Heart right ventricle (tissue), 16 donors: ENCODE measurements at regions of chr4 and their contacts with region 1.

Region 1: GRCh38 chr4:80215449-80216052 is 18.2 kb downstream of the PRDM8 start:
- DNase-seq: no peak
- ATAC-seq: peak in 1 of 8 donors; percentile 33
- H3K4me3 ChIP-seq: no peak overlapping the region
- H3K27ac ChIP-seq: no peak overlapping the region
- H3K4me1 ChIP-seq: peaks cover 0 to 6% (median 0%) of the 10 kb centered on the region in 9 donors
- H3K27me3 ChIP-seq: peaks cover 0 to 50% (median 23%) of the 10 kb centered on the region in 7 donors
- CTCF ChIP-seq: peak; percentile 37 to 83 (median 75)

Region 2: DNA sequence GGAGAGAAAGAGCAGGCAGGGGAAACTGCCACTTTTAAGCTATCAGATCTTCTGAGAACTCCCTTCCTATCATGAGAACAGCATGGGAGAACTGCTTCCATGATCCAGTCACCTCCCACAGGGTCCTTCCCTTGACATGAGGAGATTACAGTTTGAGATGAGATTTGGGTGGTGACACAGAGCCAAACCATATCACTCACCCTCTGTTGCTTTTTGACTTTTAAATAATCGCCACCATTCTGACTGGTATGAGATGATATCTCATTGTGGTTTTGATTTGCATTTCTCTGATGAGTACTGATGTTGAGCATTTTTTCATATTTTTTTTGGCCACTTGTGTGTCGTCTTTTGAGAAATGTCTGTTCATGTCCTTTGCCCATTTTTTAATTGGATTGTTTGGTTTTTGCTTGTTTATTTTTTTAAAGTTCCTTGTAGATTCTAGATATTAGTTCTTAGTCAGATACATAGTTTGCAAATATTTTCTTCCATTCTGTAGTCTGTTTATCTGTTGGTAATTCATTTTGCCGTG is 1269.8 kb before region 1 on chr4:
- intact Hi-C with region 1: loop called in 6 of 10 experiments (anchors 5 kb)
- DNase-seq: no peak
- ATAC-seq: no peak
- H3K4me3 ChIP-seq: no peak overlapping the region
- H3K27ac ChIP-seq: no peak overlapping the region
- H3K4me1 ChIP-seq: peaks cover 0 to 9% (median 0%) of the 10 kb centered on the region in 9 donors
- H3K27me3 ChIP-seq: peaks cover 0 to 3% (median 0%) of the 10 kb centered on the region in 7 donors
- CTCF ChIP-seq: no peak

Region 3: DNA sequence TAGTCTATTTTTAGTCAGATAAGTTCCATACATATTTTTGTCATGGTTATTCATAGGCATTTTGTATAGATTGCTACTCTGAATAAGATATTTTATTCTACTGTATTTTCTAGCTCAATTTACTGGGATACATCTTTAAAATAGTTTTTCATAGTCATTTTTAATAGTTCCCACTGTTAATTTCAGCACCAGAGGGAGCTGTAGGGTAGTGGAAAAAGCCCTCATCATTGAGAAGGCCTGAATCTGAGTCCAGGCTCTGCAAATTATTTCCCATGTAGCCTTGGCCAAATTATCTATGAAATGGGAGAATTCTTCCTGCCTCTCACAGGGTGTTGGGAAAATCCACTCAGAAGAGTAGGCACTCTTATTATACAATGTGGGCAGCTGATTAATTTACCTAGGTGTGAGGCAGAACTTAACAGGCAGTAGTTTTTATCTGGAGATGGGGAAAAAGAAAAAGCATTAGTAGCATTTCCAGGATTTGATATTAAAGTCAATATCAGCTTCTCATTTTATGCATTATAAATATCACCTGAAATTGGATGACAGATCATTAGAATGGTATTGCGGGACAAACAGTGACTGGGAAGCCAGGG is 1173.4 kb before region 1 on chr4:
- intact Hi-C with region 1: loop called in 3 of 10 experiments (anchors 10 kb)
- DNase-seq: peak in 1 of 2 donors; percentile 10
- ATAC-seq: peak in 2 of 8 donors; percentile 45 to 61
- H3K4me3 ChIP-seq: no peak overlapping the region
- H3K27ac ChIP-seq: no peak overlapping the region
- H3K4me1 ChIP-seq: peaks cover 0 to under 1% (median 0%) of the 10 kb centered on the region in 9 donors
- H3K27me3 ChIP-seq: no peaks in the 10 kb centered on the region
- CTCF ChIP-seq: peak in 8 of 9 donors; percentile 30 to 71 (median 56)

Region 4: GRCh38 chr4:80125252-80126177 is 90.0 kb before region 1 on chr4:
- intact Hi-C with region 1: no loop called
- DNase-seq: no peak
- ATAC-seq: no peak
- H3K4me3 ChIP-seq: no peak overlapping the region
- H3K27ac ChIP-seq: peak overlapping the region in 1 of 10 donors; percentile 13
- H3K4me1 ChIP-seq: peaks cover 0 to 31% (median 0%) of the 10 kb centered on the region in 9 donors
- H3K27me3 ChIP-seq: no peaks in the 10 kb centered on the region
- CTCF ChIP-seq: peak in 7 of 9 donors; percentile 29 to 56 (median 42)